CD8-positive, alpha-beta T cell (primary cell): ENCODE measurements at regions of chr20 and their contacts with region 1.

Region 1: DNA sequence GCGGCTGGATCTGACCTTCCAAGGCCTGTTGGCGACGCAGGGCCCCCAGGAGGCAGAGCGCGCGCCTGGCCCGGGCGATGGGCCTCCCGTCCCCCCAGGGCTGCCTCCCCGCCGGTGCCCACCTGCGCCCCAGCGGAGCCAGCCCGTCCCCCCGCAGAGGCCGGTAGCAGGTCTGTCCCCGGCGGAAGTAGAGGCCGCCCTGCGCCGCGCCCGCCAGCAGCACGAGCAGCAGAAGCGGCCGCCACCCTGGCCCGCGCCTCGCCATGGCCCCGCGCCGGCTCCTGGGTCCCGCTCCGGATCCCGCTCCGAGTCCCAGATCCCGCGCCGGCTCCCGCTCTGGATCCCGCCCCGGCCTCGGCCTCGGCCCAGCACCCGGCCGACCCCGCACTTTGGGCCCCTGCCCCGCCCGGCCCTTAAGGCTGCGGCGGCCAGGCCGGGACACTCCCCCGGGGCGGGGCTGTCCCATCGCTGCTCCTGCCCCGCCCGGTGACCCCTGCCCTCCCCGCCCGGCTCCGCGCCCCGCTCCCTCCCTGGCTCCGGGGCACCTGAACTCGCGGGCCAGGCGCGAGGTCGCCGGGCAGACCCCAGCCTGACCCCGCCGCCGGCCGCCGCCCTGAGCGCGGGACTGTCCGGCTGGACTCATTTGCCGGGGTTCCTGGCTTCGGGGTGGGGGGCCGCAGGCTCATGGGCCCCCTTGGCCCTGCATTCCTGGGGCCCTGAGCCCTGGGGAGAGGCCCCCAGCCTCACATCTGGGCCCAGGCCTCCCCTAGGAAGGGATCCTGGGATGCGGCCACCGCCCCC is at the start of gene CTSZ:
- DNase-seq: peak in 6 of 9 experiments; percentile 28 to 69 (median 48)
- ATAC-seq: peak; percentile 54
- H3K4me3 ChIP-seq: peak within 1 kb of the TSS; percentile 48 to 60
- H3K4me3 Mint-ChIP-seq: peak within 1 kb of the TSS; percentile 72
- H3K27ac ChIP-seq: no peak within 1 kb of the TSS
- H3K27ac Mint-ChIP-seq: no peak within 1 kb of the TSS
- H3K4me1 ChIP-seq: peaks cover 36% of the 10 kb centered on the region
- H3K4me1 Mint-ChIP-seq: peaks cover 35% of the 10 kb centered on the region
- H3K27me3 ChIP-seq: no peaks in the 10 kb centered on the region
- H3K27me3 Mint-ChIP-seq: no peaks in the 10 kb centered on the region
- CTCF ChIP-seq: no peak
- total RNA-seq, gene CTSZ: 5.1 to 7.0 TPM

Region 2: GRCh38 chr20:58980700-58981627 is 26.1 kb before region 1 on chr20 and contains the start of gene NELFCD:
- CTCF ChIA-PET with region 1: no interaction called
- POLR2A ChIA-PET with region 1: no interaction called
- intact Hi-C with region 1: loop called (anchors 1 to 2 kb)
- DNase-seq: peak; percentile 81 to 94 (median 89)
- ATAC-seq: peak; percentile 87
- H3K4me3 ChIP-seq: peak within 1 kb of the TSS; percentile 77 to 93
- H3K4me3 Mint-ChIP-seq: peak within 1 kb of the TSS; percentile 93
- H3K27ac ChIP-seq: peak within 1 kb of the TSS; percentile 62 to 66
- H3K27ac Mint-ChIP-seq: peak within 1 kb of the TSS; percentile 94
- H3K4me1 ChIP-seq: peaks cover 29% of the 10 kb centered on the region
- H3K4me1 Mint-ChIP-seq: peaks cover 39% of the 10 kb centered on the region
- H3K27me3 ChIP-seq: no peaks in the 10 kb centered on the region
- H3K27me3 Mint-ChIP-seq: no peaks in the 10 kb centered on the region
- CTCF ChIP-seq: no peak
- total RNA-seq, gene NELFCD: 101 to 113 TPM

Region 3: GRCh38 chr20:59087829-59088433 is 80.9 kb after region 1 on chr20:
- CTCF ChIA-PET with region 1: no interaction called
- POLR2A ChIA-PET with region 1: no interaction called
- intact Hi-C with region 1: no loop called
- DNase-seq: peak; percentile 73 to 94 (median 84)
- ATAC-seq: peak; percentile 87
- H3K4me3 ChIP-seq: no peak overlapping the region
- H3K4me3 Mint-ChIP-seq: no peak overlapping the region
- H3K27ac ChIP-seq: no peak overlapping the region
- H3K27ac Mint-ChIP-seq: no peak overlapping the region
- H3K4me1 ChIP-seq: peaks cover 4% of the 10 kb centered on the region
- H3K4me1 Mint-ChIP-seq: peaks cover 11% of the 10 kb centered on the region
- H3K27me3 ChIP-seq: no peaks in the 10 kb centered on the region
- H3K27me3 Mint-ChIP-seq: no peaks in the 10 kb centered on the region
- CTCF ChIP-seq: peak; percentile 88